CD4-positive, alpha-beta T cell (primary cell): ENCODE measurements at regions of chr12 and their contacts with region 1.

Region 1: DNA sequence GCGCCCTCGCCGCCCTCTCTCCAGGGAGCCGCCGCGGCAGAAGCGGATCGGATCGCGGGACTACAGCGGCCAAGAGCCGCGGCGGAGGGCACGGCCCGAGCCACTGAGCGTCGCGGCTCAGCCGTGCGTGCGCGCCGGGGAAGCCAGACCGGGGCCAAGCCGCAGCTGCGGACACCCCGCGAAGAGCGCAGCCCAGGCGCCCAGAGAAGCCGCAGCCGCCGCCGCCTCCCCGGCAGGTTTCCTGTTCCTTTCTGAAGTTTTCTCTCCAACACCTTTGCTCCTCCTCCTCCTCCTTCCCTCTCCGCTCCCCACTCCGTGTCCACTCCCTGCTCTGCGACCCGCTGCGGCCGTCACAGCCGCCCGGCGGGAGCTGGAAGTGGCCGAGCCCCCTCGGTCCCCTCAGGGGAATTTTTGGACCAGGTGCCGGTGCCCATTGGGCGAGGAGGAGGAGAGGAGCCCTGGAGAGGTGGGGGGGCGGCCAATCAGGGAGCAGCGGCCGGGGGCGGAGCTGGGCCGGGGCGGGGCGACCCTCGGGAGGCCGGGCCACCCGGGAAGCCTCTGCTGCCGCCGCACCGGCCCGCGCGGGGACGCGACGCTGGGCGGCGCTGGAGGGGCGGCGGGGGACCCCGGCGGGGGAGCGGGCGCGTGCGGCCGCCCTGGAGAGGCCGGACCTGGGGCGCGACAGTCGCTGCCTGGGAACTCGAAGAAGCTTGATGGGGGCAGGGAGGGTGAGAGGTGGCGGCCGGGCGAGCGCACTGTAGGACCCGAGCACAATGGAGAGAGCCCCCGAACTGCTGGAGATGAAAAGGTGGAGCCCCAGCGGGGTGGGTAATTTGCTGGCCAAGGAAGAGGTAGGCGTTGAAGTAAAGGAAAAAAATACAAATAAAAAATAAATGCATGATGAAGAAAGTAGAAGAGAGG is at the start of gene ITPR2:
- DNase-seq: peak; percentile 80 to 96 (median 92)
- ATAC-seq: peak; percentile 90
- H3K4me3 ChIP-seq: peak within 1 kb of the TSS; percentile 82
- H3K4me3 Mint-ChIP-seq: peak within 1 kb of the TSS; percentile 98
- H3K27ac ChIP-seq: peak within 1 kb of the TSS; percentile 89 to 92
- H3K27ac Mint-ChIP-seq: peak within 1 kb of the TSS; percentile 96
- H3K4me1 ChIP-seq: peaks cover 26% of the 10 kb centered on the region
- H3K4me1 Mint-ChIP-seq: peaks cover 47% of the 10 kb centered on the region
- H3K27me3 ChIP-seq: no peaks in the 10 kb centered on the region
- H3K27me3 Mint-ChIP-seq: no peaks in the 10 kb centered on the region
- CTCF ChIP-seq: peak; percentile 12
- total RNA-seq, gene ITPR2: 28.8 to 29.9 TPM

Region 2: DNA sequence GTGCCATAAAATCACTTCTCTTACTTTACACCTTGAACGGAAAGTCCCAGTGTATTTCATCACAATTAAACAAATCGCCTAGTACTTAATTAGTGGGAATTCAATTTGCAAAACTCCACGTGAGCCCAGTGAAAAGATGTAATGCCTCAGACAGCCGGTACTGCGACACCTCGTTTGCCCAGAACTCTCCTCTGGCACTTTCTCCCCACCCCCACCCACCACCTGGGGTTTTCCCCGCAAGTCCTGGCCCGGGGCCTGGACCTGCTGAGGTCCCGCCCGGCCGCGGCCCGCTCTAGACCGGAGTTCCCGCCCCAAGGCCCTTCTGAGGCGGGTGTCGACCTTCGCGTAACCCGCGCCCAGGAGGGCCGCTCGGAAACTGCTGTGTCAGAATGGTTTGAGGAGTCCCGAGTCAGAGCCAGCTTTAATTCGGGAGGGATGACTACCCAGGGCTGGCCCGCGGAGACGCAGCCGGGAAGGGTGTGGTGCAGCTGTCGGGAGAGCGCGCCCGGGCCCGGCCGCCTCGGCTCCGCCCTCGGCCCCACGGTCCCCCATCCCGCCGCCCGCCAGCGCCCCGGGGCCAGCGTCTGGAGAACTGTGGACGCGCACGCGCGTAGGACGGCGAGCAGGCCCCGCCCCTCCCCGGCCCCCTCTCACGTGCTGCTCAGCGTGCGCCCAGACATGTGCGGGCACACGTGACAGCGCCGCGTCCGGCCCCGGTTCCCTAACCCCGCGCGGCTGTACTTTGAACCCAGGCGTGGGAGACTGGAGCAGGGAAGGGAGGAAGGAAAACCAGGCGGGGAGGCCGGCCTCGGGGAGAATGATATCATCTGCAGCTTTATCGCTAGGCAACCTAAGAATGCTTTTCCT is 719.0 kb before region 1 on chr12:
- CTCF ChIA-PET with region 1: no interaction called
- POLR2A ChIA-PET with region 1: no interaction called
- intact Hi-C with region 1: loop called in 1 of 2 experiments (anchors 10 kb)
- DNase-seq: peak; percentile 45 to 87 (median 66)
- ATAC-seq: peak; percentile 76
- H3K4me3 ChIP-seq: peak overlapping the region; percentile 57
- H3K4me3 Mint-ChIP-seq: peak overlapping the region; percentile 87
- H3K27ac ChIP-seq: no peak overlapping the region
- H3K27ac Mint-ChIP-seq: peak overlapping the region; percentile 45
- H3K4me1 ChIP-seq: peaks cover 12% of the 10 kb centered on the region
- H3K4me1 Mint-ChIP-seq: peaks cover 4% of the 10 kb centered on the region
- H3K27me3 ChIP-seq: peaks cover 3 to 20% of the 10 kb centered on the region in 2 experiments
- H3K27me3 Mint-ChIP-seq: peaks cover 32% of the 10 kb centered on the region
- CTCF ChIP-seq: no peak

Region 3: GRCh38 chr12:26786865-26787514 is 46.1 kb before region 1 on chr12:
- CTCF ChIA-PET with region 1: no interaction called
- POLR2A ChIA-PET with region 1: no interaction called
- intact Hi-C with region 1: no loop called
- DNase-seq: no peak
- ATAC-seq: no peak
- H3K4me3 ChIP-seq: no peak overlapping the region
- H3K4me3 Mint-ChIP-seq: no peak overlapping the region
- H3K27ac ChIP-seq: no peak overlapping the region
- H3K27ac Mint-ChIP-seq: no peak overlapping the region
- H3K4me1 ChIP-seq: no peaks in the 10 kb centered on the region
- H3K4me1 Mint-ChIP-seq: peaks cover 31% of the 10 kb centered on the region
- H3K27me3 ChIP-seq: no peaks in the 10 kb centered on the region
- H3K27me3 Mint-ChIP-seq: no peaks in the 10 kb centered on the region
- CTCF ChIP-seq: no peak

Region 4: GRCh38 chr12:26845057-26845666 is 12.1 kb after region 1 on chr12:
- CTCF ChIA-PET with region 1: interaction called, 19 read pairs
- POLR2A ChIA-PET with region 1: interaction called, 8 read pairs
- intact Hi-C with region 1: no loop called
- DNase-seq: peak in 5 of 14 experiments; percentile 16 to 55 (median 42)
- ATAC-seq: no peak
- H3K4me3 ChIP-seq: no peak overlapping the region
- H3K4me3 Mint-ChIP-seq: no peak overlapping the region
- H3K27ac ChIP-seq: no peak overlapping the region
- H3K27ac Mint-ChIP-seq: no peak overlapping the region
- H3K4me1 ChIP-seq: no peaks in the 10 kb centered on the region
- H3K4me1 Mint-ChIP-seq: peaks cover 16% of the 10 kb centered on the region
- H3K27me3 ChIP-seq: peaks cover 0 to 2% of the 10 kb centered on the region in 2 experiments
- H3K27me3 Mint-ChIP-seq: peaks cover 13% of the 10 kb centered on the region
- CTCF ChIP-seq: peak; percentile 63

Region 5: GRCh38 chr12:26937875-26938700 is 105.0 kb after region 1 on chr12 and contains the starts of genes FGFR1OP2 and INTS13:
- CTCF ChIA-PET with region 1: interaction called, 6 read pairs
- POLR2A ChIA-PET with region 1: interaction called, 3 read pairs
- intact Hi-C with region 1: loop called in 1 of 2 experiments (anchors 2 kb)
- DNase-seq: peak; percentile 89 to 98 (median 94)
- ATAC-seq: peak; percentile 91
- H3K4me3 ChIP-seq: peak within 1 kb of the TSS; percentile 71
- H3K4me3 Mint-ChIP-seq: peak within 1 kb of the TSS; percentile 90
- H3K27ac ChIP-seq: peak within 1 kb of the TSS; percentile 94 to 95
- H3K27ac Mint-ChIP-seq: peak within 1 kb of the TSS; percentile 86
- H3K4me1 ChIP-seq: peaks cover 22% of the 10 kb centered on the region
- H3K4me1 Mint-ChIP-seq: peaks cover 80% of the 10 kb centered on the region
- H3K27me3 ChIP-seq: no peaks in the 10 kb centered on the region
- H3K27me3 Mint-ChIP-seq: no peaks in the 10 kb centered on the region
- CTCF ChIP-seq: no peak
- total RNA-seq, gene FGFR1OP2: 44.8 to 46.8 TPM
- total RNA-seq, gene INTS13: 8.5 to 12.1 TPM

Region 6: GRCh38 chr12:27024291-27024690 is 191.2 kb after region 1 on chr12:
- CTCF ChIA-PET with region 1: interaction called, 9 read pairs
- POLR2A ChIA-PET with region 1: interaction called, 52 read pairs
- intact Hi-C with region 1: no loop called
- DNase-seq: no peak
- ATAC-seq: no peak
- H3K4me3 ChIP-seq: no peak overlapping the region
- H3K4me3 Mint-ChIP-seq: peak overlapping the region; percentile 91
- H3K27ac ChIP-seq: no peak overlapping the region
- H3K27ac Mint-ChIP-seq: peak overlapping the region; percentile 92
- H3K4me1 ChIP-seq: peaks cover 19% of the 10 kb centered on the region
- H3K4me1 Mint-ChIP-seq: peaks cover 43% of the 10 kb centered on the region
- H3K27me3 ChIP-seq: no peaks in the 10 kb centered on the region
- H3K27me3 Mint-ChIP-seq: no peaks in the 10 kb centered on the region
- CTCF ChIP-seq: no peak

Region 7: GRCh38 chr12:27523642-27524493 is 690.8 kb after region 1 on chr12 and contains the start of gene PPFIBP1:
- CTCF ChIA-PET with region 1: no interaction called
- POLR2A ChIA-PET with region 1: interaction called, 4 read pairs
- intact Hi-C with region 1: loop called in 1 of 2 experiments (anchors 5 kb)
- DNase-seq: peak; percentile 94 to 100 (median 98)
- ATAC-seq: peak; percentile 95
- H3K4me3 ChIP-seq: peak within 1 kb of the TSS; percentile 75
- H3K4me3 Mint-ChIP-seq: peak within 1 kb of the TSS; percentile 99
- H3K27ac ChIP-seq: peak within 1 kb of the TSS; percentile 36 to 54
- H3K27ac Mint-ChIP-seq: peak within 1 kb of the TSS; percentile 96
- H3K4me1 ChIP-seq: peaks cover 16% of the 10 kb centered on the region
- H3K4me1 Mint-ChIP-seq: peaks cover 40% of the 10 kb centered on the region
- H3K27me3 ChIP-seq: no peaks in the 10 kb centered on the region
- H3K27me3 Mint-ChIP-seq: no peaks in the 10 kb centered on the region
- CTCF ChIP-seq: no peak
- total RNA-seq, gene PPFIBP1: 2.6 to 2.9 TPM